HAP-1 (cell line): ENCODE measurements at regions of chr19 and their contacts with region 1.

Region 1: GRCh38 chr19:47444388-47444821 is 25.1 kb upstream of the MEIS3 start:
- DNase-seq: peak in 1 of 2 experiments; percentile 65
- H3K4me3 ChIP-seq: no peak overlapping the region
- H3K4me1 ChIP-seq: peaks cover 5% of the 10 kb centered on the region
- H3K27me3 ChIP-seq: peaks cover 76% of the 10 kb centered on the region

Region 2: GRCh38 chr19:47324502-47324901 is 119.9 kb before region 1 on chr19:
- in situ Hi-C with region 1: no loop called
- DNase-seq: no peak
- H3K4me3 ChIP-seq: no peak overlapping the region
- H3K4me1 ChIP-seq: no peaks in the 10 kb centered on the region
- H3K27me3 ChIP-seq: no peaks in the 10 kb centered on the region; the same call in 1 of the 2 replicates

Region 3: DNA sequence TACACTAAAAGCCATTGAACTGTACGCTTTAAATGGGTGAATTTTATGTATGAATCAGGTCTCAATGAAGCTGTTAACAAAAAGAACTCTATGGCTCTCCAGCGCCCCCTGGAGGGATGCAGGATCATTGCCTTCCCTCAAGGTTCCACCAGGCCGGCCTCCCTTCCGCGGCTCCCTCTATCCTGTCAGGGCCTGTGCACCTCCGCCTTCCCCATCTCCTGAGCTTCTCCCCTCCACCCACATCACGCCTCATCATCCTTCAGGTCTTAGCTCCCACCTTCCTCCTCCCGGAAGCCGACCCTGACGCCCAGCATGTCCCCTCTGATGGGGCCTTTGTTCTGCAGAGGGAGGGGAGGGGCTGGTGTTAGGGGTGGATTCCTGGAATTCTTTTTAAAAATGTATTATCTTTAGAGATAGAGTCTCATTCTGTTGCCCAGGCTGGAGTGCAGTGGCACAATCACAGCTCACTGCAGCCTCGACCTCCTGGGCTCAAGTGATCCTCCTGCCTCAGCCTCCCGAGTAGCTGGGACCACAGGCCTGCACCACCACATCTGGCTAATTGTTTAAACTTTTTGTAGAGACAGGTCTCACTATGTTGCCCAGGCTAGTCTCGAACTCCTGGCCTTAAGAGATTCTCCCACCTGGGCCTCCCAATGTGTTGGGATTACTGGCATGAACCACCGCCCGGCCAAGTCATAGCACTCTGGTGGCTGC is 52.7 kb before region 1 on chr19:
- in situ Hi-C with region 1: no loop called
- DNase-seq: peak; percentile 63 to 91
- H3K4me3 ChIP-seq: no peak overlapping the region
- H3K4me1 ChIP-seq: no peaks in the 10 kb centered on the region
- H3K27me3 ChIP-seq: no peaks in the 10 kb centered on the region

Region 4: DNA sequence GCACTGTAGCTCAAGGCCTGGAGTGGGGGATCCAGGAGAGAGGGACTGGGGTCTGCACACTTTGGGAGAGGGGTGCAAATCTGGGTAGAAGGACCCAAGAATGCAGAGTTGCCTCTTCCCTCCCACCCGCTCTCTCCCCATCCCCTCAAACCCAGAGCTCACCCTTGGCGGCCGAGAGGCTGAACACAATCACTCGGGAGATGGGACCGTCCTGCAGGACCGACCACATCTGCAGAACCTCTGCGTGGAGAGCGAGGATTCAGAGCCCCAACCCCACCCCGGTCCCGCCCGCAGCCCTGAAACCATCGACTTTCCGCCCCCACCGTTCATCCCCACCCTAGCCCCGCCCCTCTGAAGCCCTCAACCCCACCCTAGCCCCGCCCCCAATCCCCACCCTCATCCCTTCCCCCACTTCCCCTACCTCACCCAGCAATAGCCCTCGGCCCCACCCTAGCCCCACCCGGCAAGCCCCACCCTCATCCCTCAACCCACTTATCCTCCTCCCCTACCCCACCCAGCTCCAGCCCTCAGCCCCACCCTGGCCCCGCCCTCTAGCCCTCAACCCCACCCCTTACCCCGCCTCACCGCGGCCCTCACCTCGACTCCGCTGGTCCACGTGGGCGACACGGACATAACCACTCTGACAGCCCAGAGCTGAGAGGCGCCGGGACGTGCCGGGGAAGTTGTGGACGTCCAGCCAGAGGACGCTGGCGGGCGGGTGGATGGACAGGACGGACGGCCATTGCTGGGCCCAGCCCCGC is 35.5 kb after region 1 on chr19:
- in situ Hi-C with region 1: loop called (anchors 5 kb)
- DNase-seq: peak in 1 of 2 experiments; percentile 37
- H3K4me3 ChIP-seq: no peak overlapping the region
- H3K4me1 ChIP-seq: no peaks in the 10 kb centered on the region
- H3K27me3 ChIP-seq: no peaks in the 10 kb centered on the region

Region 5: GRCh38 chr19:47540728-47541127 is 96.3 kb after region 1 on chr19:
- in situ Hi-C with region 1: no loop called
- DNase-seq: peak; percentile 49 to 60
- H3K4me3 ChIP-seq: no peak overlapping the region
- H3K4me1 ChIP-seq: peaks cover 4% of the 10 kb centered on the region; the same call in 1 of the 2 replicates
- H3K27me3 ChIP-seq: no peaks in the 10 kb centered on the region